Breast epithelium (tissue), 4 donors: ENCODE measurements at regions of chr17 and their contacts with region 1.

Region 1: GRCh38 chr17:65455972-65456343 is 105.5 kb downstream of the AXIN2 start:
- DNase-seq: no peak
- H3K4me3 ChIP-seq: no peak overlapping the region
- H3K27ac ChIP-seq: no peak overlapping the region
- H3K4me1 ChIP-seq: no peaks in the 10 kb centered on the region
- H3K27me3 ChIP-seq: no peaks in the 10 kb centered on the region
- CTCF ChIP-seq: no peak
- POLR2A ChIP-seq: no peak

Region 2: GRCh38 chr17:65385726-65386125 is 70.2 kb before region 1 on chr17:
- intact Hi-C with region 1: loop called (anchors 2 kb)
- DNase-seq: no peak
- H3K4me3 ChIP-seq: no peak overlapping the region
- H3K27ac ChIP-seq: no peak overlapping the region
- H3K4me1 ChIP-seq: no peaks in the 10 kb centered on the region
- H3K27me3 ChIP-seq: no peaks in the 10 kb centered on the region
- CTCF ChIP-seq: no peak
- POLR2A ChIP-seq: no peak